Caco-2 (cell line): ENCODE measurements at regions of chr4 and their contacts with region 1.

Region 1: DNA sequence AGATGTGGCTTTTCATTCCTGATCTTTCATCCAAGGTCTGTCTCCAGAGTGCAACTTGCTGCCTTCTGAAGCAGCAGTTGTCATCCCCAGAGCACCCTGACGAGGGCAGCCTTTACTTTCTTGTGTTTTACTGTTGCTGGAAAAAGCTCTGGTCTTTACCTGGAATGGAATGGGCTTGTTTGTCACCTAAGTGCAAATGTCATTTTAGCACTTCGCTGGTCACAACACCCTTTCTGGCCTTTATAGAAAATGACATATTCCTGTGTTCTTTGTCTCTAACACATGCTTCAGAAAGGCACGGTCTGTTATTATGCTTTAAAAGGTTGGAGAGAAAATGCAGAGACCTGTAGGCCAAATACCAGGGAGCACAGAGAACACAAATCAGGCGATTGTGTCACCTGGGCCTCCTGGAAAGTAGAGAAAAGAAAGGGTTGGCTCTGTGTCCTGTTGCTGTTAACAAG is 332.7 kb upstream of the IGFBP7 start:
- DNase-seq: peak; percentile 55 to 61
- H3K4me3 ChIP-seq: no peak overlapping the region
- H3K4me3 Mint-ChIP-seq: no peak overlapping the region
- H3K27ac Mint-ChIP-seq: no peak overlapping the region
- H3K4me1 ChIP-seq: no peaks in the 10 kb centered on the region
- H3K4me1 Mint-ChIP-seq: no peaks in the 10 kb centered on the region
- H3K27me3 ChIP-seq: no peaks in the 10 kb centered on the region
- H3K27me3 Mint-ChIP-seq: peaks cover 13% of the 10 kb centered on the region
- CTCF ChIP-seq: peak; percentile 59 to 84

Region 2: DNA sequence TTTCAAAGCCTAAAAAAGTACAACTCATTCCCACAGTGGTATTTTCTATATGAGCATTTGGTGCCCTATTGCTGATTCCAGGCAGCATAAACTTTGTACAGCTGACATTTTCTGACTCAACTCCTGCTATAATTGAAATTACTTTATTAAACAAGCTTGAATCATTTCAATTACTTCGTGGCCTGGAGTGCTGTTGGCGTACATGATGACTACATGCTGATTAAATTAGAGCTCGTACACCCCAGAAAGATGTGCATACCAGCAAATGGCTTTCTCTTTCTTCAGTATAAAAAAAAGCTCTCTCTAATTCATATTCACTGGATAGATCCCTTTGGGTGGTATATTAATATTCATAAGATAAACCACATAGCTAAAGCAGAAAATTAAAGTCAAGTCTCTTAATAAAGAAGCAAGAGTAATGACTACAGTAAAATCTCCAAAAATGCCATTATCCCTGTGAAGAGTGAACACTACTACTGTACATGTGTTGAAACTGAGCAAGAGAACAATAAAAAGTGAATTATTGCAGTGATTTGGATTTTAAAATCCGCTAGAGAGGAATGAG is 87.7 kb before region 1 on chr4:
- CTCF ChIA-PET with region 1: no interaction called
- POLR2A ChIA-PET with region 1: no interaction called
- intact Hi-C with region 1: no loop called
- DNase-seq: no peak
- H3K4me3 ChIP-seq: no peak overlapping the region
- H3K4me3 Mint-ChIP-seq: no peak overlapping the region
- H3K27ac Mint-ChIP-seq: no peak overlapping the region
- H3K4me1 ChIP-seq: no peaks in the 10 kb centered on the region
- H3K4me1 Mint-ChIP-seq: no peaks in the 10 kb centered on the region
- H3K27me3 ChIP-seq: no peaks in the 10 kb centered on the region
- H3K27me3 Mint-ChIP-seq: peaks cover 9% of the 10 kb centered on the region
- CTCF ChIP-seq: no peak

Region 3: GRCh38 chr4:57462843-57463242 is 20.0 kb after region 1 on chr4:
- CTCF ChIA-PET with region 1: no interaction called
- POLR2A ChIA-PET with region 1: no interaction called
- intact Hi-C with region 1: no loop called
- DNase-seq: peak in 1 of 2 experiments; percentile 14
- H3K4me3 ChIP-seq: no peak overlapping the region
- H3K4me3 Mint-ChIP-seq: no peak overlapping the region
- H3K27ac Mint-ChIP-seq: no peak overlapping the region
- H3K4me1 ChIP-seq: peaks cover 5% of the 10 kb centered on the region; the same call in 1 of the 2 replicates
- H3K4me1 Mint-ChIP-seq: no peaks in the 10 kb centered on the region
- H3K27me3 ChIP-seq: no peaks in the 10 kb centered on the region
- H3K27me3 Mint-ChIP-seq: no peaks in the 10 kb centered on the region
- CTCF ChIP-seq: no peak

Region 4: GRCh38 chr4:57499786-57500185 is 56.9 kb after region 1 on chr4:
- CTCF ChIA-PET with region 1: no interaction called
- POLR2A ChIA-PET with region 1: no interaction called
- intact Hi-C with region 1: loop called (anchors 1 kb)
- DNase-seq: peak in 1 of 2 experiments; percentile 22
- H3K4me3 ChIP-seq: no peak overlapping the region
- H3K4me3 Mint-ChIP-seq: no peak overlapping the region
- H3K27ac Mint-ChIP-seq: no peak overlapping the region
- H3K4me1 ChIP-seq: no peaks in the 10 kb centered on the region
- H3K4me1 Mint-ChIP-seq: no peaks in the 10 kb centered on the region
- H3K27me3 ChIP-seq: no peaks in the 10 kb centered on the region
- H3K27me3 Mint-ChIP-seq: peaks cover 4% of the 10 kb centered on the region
- CTCF ChIP-seq: no peak

Region 5: DNA sequence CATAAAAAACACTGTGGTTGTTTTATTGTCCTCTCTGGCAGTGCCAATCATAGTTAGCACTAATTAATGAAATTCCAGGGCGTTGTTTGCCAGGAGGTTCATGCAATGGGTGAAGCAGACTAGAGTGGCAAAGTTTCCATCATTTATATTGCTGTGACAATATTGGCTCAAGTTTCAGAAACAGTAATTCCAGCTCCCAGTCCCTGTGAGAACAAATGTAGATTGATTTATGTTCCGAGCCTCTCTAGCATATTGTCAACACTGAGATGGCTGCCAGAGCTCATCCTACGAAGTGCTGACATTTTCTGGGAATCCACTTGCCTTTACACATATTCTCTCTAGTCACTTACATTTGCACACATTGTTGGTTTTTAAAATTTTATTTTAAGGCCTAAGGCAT is 107.3 kb after region 1 on chr4:
- CTCF ChIA-PET with region 1: no interaction called
- POLR2A ChIA-PET with region 1: no interaction called
- intact Hi-C with region 1: loop called (anchors 10 kb)
- DNase-seq: no peak
- H3K4me3 ChIP-seq: no peak overlapping the region
- H3K4me3 Mint-ChIP-seq: no peak overlapping the region
- H3K27ac Mint-ChIP-seq: no peak overlapping the region
- H3K4me1 ChIP-seq: no peaks in the 10 kb centered on the region
- H3K4me1 Mint-ChIP-seq: no peaks in the 10 kb centered on the region
- H3K27me3 ChIP-seq: no peaks in the 10 kb centered on the region
- H3K27me3 Mint-ChIP-seq: no peaks in the 10 kb centered on the region
- CTCF ChIP-seq: no peak

Region 6: DNA sequence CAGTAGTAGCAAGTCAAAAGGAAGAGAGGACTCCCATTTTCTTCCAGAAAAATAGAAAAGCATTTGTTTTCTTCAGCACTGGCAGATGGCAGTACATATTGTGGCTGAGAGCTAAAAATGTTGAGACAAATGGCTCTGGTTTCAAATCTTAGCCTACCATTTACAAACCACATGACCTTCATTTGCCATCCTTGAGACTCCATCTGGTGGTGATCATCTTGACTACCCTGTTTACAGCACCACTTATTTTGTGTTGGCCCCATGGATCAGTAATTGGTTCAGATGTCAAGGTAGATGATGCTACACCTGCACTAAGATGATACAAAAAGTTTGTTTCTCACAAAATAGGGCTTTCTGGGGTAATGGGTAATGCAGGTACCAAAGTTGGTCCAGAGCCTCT is 619.1 kb after region 1 on chr4:
- CTCF ChIA-PET with region 1: no interaction called
- POLR2A ChIA-PET with region 1: no interaction called
- intact Hi-C with region 1: loop called (anchors 1 kb)
- DNase-seq: no peak
- H3K4me3 ChIP-seq: no peak overlapping the region
- H3K4me3 Mint-ChIP-seq: no peak overlapping the region
- H3K27ac Mint-ChIP-seq: peak overlapping the region; percentile 25
- H3K4me1 ChIP-seq: no peaks in the 10 kb centered on the region
- H3K4me1 Mint-ChIP-seq: no peaks in the 10 kb centered on the region
- H3K27me3 ChIP-seq: no peaks in the 10 kb centered on the region
- H3K27me3 Mint-ChIP-seq: no peaks in the 10 kb centered on the region
- CTCF ChIP-seq: no peak

Region 7: DNA sequence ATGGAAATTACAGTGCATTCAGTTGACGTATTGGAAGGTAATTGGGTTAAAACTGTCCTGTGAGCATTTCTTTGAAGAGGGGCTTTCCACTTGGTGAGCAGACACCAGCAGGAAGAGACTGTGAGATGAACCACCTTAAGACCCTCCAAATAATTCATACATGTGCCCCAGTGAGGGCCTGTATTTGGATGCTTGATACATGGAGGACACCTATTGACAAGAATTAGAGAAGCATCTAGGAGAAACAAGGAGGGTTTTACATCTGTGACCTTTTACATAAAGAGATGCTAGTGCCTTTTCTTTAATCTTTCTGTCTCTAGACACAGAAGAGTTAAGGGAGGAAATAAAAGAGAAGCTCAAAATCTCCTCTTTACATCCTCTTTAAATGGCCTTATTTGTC is 782.6 kb after region 1 on chr4:
- CTCF ChIA-PET with region 1: interaction called, 4 read pairs
- POLR2A ChIA-PET with region 1: no interaction called
- intact Hi-C with region 1: loop called (anchors 2 kb)
- DNase-seq: no peak
- H3K4me3 ChIP-seq: no peak overlapping the region
- H3K4me3 Mint-ChIP-seq: no peak overlapping the region
- H3K27ac Mint-ChIP-seq: no peak overlapping the region
- H3K4me1 ChIP-seq: no peaks in the 10 kb centered on the region
- H3K4me1 Mint-ChIP-seq: no peaks in the 10 kb centered on the region
- H3K27me3 ChIP-seq: no peaks in the 10 kb centered on the region
- H3K27me3 Mint-ChIP-seq: no peaks in the 10 kb centered on the region
- CTCF ChIP-seq: no peak